Posterior vena cava (tissue), 2 donors: ENCODE measurements at regions of chr16 and their contacts with region 1.

Region 1: DNA sequence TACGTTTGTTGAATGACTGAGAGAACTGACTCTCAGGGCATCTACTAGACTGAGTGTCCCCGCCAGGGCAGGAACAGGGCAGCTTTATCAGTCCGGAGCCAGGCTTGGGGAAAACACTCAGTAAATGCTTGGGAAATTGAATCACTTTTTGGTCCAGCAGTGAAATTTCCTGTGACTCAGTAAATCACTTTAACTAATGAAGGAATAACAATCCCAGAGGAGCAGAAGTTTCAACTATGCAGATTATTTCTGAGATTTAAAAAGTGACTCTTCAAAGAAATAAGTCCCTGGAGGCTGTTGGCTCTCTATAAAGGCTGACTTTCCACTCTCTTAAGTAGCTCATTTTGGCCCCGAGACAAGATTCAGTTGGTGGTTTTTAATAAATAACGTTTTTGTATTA is 101.8 kb downstream of the FOXL1 start:
- DNase-seq: no peak

Region 2: GRCh38 chr16:86585821-86586611 is 94.1 kb before region 1 on chr16:
- intact Hi-C with region 1: loop called in 1 of 2 experiments (anchors 5 kb)
- DNase-seq: peak; percentile 55

Region 3: GRCh38 chr16:86618811-86619794 is 61.1 kb before region 1 on chr16:
- intact Hi-C with region 1: loop called in 1 of 2 experiments (anchors 10 kb)
- DNase-seq: peak; percentile 87

Region 4: DNA sequence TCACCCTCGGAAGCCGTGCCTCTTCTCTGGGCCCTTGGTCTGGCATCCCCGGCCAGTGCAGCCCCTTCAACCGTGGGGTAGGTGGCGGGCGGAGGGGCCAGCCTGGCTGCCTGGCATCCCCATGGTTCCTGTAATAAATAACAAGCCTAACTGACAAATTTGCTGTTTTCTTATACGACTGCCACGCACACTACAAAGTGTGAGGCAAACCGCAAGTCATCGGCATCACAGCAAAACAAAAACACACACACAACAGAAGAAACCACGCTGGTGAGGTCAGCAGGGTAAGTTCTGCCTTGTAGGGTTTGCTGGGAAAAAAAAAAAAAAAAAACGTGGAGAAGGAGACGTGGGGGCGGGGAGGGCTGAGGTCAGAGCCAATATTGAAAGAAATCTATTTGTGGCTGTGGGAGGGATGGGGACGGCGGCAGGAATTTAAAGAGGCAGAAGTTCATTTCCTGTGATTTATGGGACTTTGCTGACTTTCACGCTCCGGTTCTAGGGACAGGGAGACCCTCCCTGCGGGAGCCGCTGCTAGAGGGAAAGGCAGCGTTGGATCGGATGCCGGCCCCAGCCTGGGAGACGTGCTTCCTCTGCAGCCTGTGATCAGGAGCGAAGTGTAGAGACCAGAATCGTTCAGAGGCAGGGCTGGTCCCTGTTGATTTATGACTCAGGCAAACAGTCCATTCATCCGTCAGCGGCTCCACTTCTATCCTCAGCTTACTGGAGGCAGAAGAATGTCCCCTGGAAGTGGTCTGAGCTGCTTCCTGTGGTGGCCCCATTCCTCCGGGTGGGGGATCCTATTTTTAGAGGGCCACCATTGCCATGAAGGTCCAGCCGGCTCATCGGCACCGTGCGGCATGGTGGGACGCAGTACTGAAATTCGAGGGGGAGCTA is 61.0 kb after region 1 on chr16:
- intact Hi-C with region 1: loop called in 1 of 2 experiments (anchors 2 kb)
- DNase-seq: peak; percentile 84